ENCODE measurements at regions of chr19 and their contacts with region 1.

Region 1: GRCh38 chr19:11367528-11367927 is 6.9 kb upstream of the SWSAP1 start:
- DNase-seq: no peak
- H3K4me3 Mint-ChIP-seq: no peak overlapping the region
- H3K27ac Mint-ChIP-seq: no peak overlapping the region
- H3K4me1 Mint-ChIP-seq: no peaks in the 10 kb centered on the region
- H3K27me3 Mint-ChIP-seq: no peaks in the 10 kb centered on the region

Region 2: GRCh38 chr19:11346092-11346940 is 21.2 kb before region 1 on chr19 and contains the starts of genes CCDC159 and TMEM205:
- CTCF ChIA-PET with region 1: interaction called, 13 read pairs
- POLR2A ChIA-PET with region 1: no interaction called
- DNase-seq: peak; percentile 99
- H3K4me3 Mint-ChIP-seq: peak within 1 kb of the TSS; percentile 92
- H3K27ac Mint-ChIP-seq: peak within 1 kb of the TSS; percentile 92
- H3K4me1 Mint-ChIP-seq: peaks cover 27% of the 10 kb centered on the region
- H3K27me3 Mint-ChIP-seq: no peaks in the 10 kb centered on the region
- total RNA-seq, gene CCDC159: 18.0 to 20.5 TPM
- total RNA-seq, gene TMEM205: 25.9 to 26.7 TPM

Region 3: GRCh38 chr19:11505032-11505503 is 137.5 kb after region 1 on chr19:
- CTCF ChIA-PET with region 1: no interaction called
- POLR2A ChIA-PET with region 1: no interaction called
- DNase-seq: peak; percentile 97
- H3K4me3 Mint-ChIP-seq: peak overlapping the region; percentile 87
- H3K27ac Mint-ChIP-seq: peak overlapping the region; percentile 94
- H3K4me1 Mint-ChIP-seq: peaks cover 27% of the 10 kb centered on the region
- H3K27me3 Mint-ChIP-seq: no peaks in the 10 kb centered on the region

Measured in activated CD4-positive, alpha-beta T cell treated with anti-CD3 and anti-CD28 coated beads, Interleukin-2, amount 10 ng/mL, durations not matched to agents 7 days and 5 days (primary cell).